IMR-90 (cell line): ENCODE measurements at regions of chr2 and their contacts with region 1.

Region 1: GRCh38 chr2:227471924-227472264 is at the start of gene AGFG1:
- DNase-seq: peak; percentile 67
- ATAC-seq: peak; percentile 93
- H3K4me3 ChIP-seq: peak within 1 kb of the TSS; percentile 99
- H3K27ac ChIP-seq: peak within 1 kb of the TSS; percentile 83
- H3K4me1 ChIP-seq: peaks cover 5% of the 10 kb centered on the region
- H3K27me3 ChIP-seq: no peaks in the 10 kb centered on the region
- CTCF ChIP-seq: peak; percentile 97
- POLR2A ChIP-seq: peak; percentile 81
- RAD21 ChIP-seq: peak; percentile 58
- total RNA-seq, gene AGFG1: 93.6 and 126 TPM in 2 replicates

Region 2: GRCh38 chr2:227324995-227325838 is 146.7 kb before region 1 on chr2 and contains the start of gene MFF:
- CTCF ChIA-PET with region 1: no interaction called
- POLR2A ChIA-PET with region 1: no interaction called
- dilution Hi-C with region 1: no loop called
- in situ Hi-C with region 1: no loop called
- intact Hi-C with region 1: loop called (anchors 1 kb)
- DNase-seq: peak; percentile 91
- ATAC-seq: peak; percentile 96
- H3K4me3 ChIP-seq: peak within 1 kb of the TSS; percentile 86
- H3K27ac ChIP-seq: peak within 1 kb of the TSS; percentile 76
- H3K4me1 ChIP-seq: 0 out of 2 replicates have a peak, but pooled peaks cover 2% of the 10 kb centered on the region
- H3K27me3 ChIP-seq: no peaks in the 10 kb centered on the region
- CTCF ChIP-seq: no peak
- POLR2A ChIP-seq: peak; percentile 82
- RAD21 ChIP-seq: no peak
- total RNA-seq, gene MFF: 86.4 and 96.4 TPM in 2 replicates

Region 3: DNA sequence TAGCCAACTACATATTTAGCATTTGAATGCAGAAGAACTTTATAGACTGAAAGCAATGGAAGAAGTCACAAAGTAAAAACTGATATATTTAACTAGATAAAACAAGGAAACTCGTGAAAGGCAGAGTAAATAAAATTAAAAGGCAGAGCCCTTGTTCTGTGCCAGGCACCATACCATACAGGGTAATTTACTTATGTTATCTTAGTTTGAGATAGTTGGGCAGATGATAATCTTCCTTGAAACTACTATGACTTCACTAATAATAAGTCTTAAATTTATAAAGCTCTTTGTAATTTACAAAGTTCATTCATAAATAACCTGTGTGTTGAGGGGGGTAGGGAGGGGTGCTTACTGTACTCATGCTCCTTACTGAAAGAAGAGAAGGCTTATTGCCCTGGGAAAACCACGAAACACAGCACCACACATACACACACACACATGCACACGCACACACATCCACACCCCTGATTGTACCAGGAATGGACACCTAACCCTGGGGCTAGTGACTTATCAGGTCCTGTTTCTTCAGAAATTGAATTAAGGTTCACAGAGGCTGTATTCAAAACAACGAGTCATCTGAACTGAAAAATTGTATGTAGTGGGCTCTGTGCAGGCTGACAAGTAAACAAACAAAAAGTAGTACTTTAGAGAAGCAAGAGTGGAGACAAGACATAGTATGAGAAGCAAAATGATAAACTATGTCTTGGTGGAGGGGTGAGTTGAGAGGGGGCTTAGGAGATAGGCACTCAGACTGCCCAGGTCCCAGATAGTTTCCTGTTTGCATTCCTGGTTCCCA is 38.1 kb after region 1 on chr2:
- CTCF ChIA-PET with region 1: interaction called, 3 read pairs
- POLR2A ChIA-PET with region 1: no interaction called
- dilution Hi-C with region 1: no loop called
- in situ Hi-C with region 1: no loop called
- intact Hi-C with region 1: loop called (anchors 5 kb)
- DNase-seq: peak; percentile 51
- ATAC-seq: peak; percentile 47
- H3K4me3 ChIP-seq: no peak overlapping the region
- H3K27ac ChIP-seq: no peak overlapping the region
- H3K4me1 ChIP-seq: peaks cover 7% of the 10 kb centered on the region
- H3K27me3 ChIP-seq: no peaks in the 10 kb centered on the region
- CTCF ChIP-seq: no peak
- POLR2A ChIP-seq: no peak
- RAD21 ChIP-seq: no peak

Region 4: GRCh38 chr2:227766373-227766883 is 294.5 kb after region 1 on chr2:
- CTCF ChIA-PET with region 1: interaction called, 3 read pairs
- POLR2A ChIA-PET with region 1: no interaction called
- dilution Hi-C with region 1: no loop called
- in situ Hi-C with region 1: loop called (anchors 10 kb)
- intact Hi-C with region 1: no loop called
- DNase-seq: peak; percentile 68
- ATAC-seq: peak; percentile 98
- H3K4me3 ChIP-seq: no peak overlapping the region
- H3K27ac ChIP-seq: no peak overlapping the region
- H3K4me1 ChIP-seq: no peaks in the 10 kb centered on the region
- H3K27me3 ChIP-seq: no peaks in the 10 kb centered on the region
- CTCF ChIP-seq: peak; percentile 84
- POLR2A ChIP-seq: no peak
- RAD21 ChIP-seq: peak; percentile 86